ENCODE measurements at regions of chr3 and their contacts with region 1.

Region 1: DNA sequence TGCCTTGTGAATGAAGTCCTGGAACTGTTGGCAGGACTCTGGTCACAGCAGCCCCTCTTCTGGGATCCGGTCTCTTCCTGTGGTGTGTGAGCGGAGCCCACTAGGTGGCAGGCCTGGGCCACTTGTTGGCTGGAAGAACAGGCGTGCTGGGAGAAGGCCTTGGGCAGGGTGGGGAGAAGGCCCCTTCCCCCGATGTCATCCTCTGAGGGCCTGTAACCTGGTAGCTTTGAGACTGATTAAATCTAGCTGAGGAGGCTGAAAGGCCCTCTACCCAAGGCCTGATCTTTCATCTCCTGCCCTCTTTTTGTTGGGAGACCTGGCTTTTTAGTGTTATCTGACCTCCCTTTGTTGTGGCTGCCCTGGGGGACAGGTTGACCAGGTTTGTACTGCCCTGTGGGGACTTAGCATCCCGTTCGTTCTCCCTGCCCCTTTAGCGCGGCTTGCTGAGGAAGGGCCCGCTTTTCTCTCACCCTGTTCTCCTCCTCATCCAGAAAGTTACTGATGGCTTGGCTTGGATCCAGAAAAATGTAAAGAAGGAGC is 48.3 kb downstream of the CHCHD6 start:
- DNase-seq: peak; percentile 26 to 86
- H3K4me3 ChIP-seq: no peak overlapping the region
- H3K27ac ChIP-seq: no peak overlapping the region
- H3K4me1 ChIP-seq: peaks cover 0 to 16% of the 10 kb centered on the region in 2 donors
- H3K27me3 ChIP-seq: no peaks in the 10 kb centered on the region
- CTCF ChIP-seq: peak; percentile 79 to 87 (median 86)

Region 2: GRCh38 chr3:126911162-126912026 is 159.0 kb after region 1 on chr3:
- intact Hi-C with region 1: no loop called
- DNase-seq: peak; percentile 42 to 77
- H3K4me3 ChIP-seq: no peak overlapping the region
- H3K27ac ChIP-seq: peak overlapping the region in 1 of 2 donors; percentile 57
- H3K4me1 ChIP-seq: no peaks in the 10 kb centered on the region
- H3K27me3 ChIP-seq: no peaks in the 10 kb centered on the region
- CTCF ChIP-seq: no peak

Region 3: DNA sequence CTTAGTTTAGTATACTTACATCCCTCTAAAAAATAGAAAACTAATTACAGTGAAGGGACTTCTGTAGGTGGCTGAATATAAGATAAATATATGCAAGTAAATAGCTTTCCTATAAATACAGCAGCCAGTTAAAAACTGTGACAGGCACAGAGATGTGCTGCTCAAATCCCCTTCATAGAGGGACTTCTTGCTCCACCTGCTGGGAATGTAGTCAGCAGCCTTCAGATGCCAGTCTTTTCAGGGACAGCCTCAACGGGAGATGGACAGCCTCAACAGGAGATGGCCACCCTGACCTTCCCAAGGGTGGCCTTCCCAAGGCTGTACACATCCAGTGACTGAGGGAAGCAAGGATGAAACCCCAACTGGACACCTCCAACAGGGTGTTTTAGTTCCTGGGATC is 424.9 kb after region 1 on chr3:
- intact Hi-C with region 1: loop called (anchors 2 kb)
- DNase-seq: no peak
- H3K4me3 ChIP-seq: no peak overlapping the region
- H3K27ac ChIP-seq: no peak overlapping the region
- H3K4me1 ChIP-seq: no peaks in the 10 kb centered on the region
- H3K27me3 ChIP-seq: no peaks in the 10 kb centered on the region
- CTCF ChIP-seq: peak in 2 of 3 experiments; percentile 23 to 54

Region 4: DNA sequence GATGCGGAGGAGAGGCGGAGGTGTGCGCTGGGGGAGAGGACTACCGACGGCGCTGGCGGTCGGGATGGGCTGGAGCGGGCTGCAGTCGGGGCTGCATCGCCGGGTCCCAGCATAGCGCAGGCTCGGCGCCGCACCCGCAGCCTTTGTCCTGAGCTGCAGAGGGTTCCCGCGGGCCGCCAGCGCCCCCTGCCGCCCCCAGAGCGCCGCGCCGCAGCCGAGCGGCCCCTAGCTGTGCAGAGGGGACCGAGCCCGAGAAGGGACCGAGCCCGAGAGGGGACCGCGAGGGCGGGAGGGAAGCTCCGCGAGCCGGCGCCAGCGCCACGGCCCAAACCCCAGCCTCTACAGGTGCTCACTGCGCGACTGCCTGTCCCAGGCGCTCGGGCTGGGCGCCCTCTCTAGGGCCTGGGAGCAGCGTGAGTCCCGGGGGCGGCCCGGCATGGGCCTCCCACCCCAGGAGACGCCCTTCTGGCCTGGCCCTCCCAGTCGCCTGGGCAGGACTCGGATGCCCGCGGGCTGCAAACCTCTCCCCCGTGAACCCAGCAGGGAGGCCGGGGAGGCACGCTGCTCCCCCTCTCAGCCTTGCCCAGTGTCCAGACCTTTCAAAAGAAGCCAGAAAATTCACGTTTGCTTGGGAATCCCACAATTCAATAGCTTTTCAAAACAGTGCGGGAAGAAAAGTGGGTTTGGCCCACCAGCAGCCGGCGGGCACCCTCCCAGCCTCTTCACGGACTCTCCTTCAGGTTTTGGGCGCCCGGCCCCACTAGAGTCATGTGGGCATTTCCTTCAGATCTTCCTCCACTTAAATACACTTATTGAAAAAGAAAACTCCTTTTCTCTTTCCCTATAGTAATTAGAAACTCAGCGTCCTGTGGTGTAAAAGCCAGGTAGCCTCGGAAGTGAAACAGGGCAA is 703.4 kb after region 1 on chr3:
- intact Hi-C with region 1: loop called (anchors 5 kb)
- DNase-seq: peak in 1 of 2 donors; percentile 79
- H3K4me3 ChIP-seq: peak overlapping the region; percentile 49 to 62
- H3K27ac ChIP-seq: no peak overlapping the region
- H3K4me1 ChIP-seq: peaks cover 0 to 18% of the 10 kb centered on the region in 2 donors
- H3K27me3 ChIP-seq: no peaks in the 10 kb centered on the region
- CTCF ChIP-seq: peak; percentile 84 to 95 (median 92)

Region 5: GRCh38 chr3:127544192-127544802 is 791.9 kb after region 1 on chr3:
- intact Hi-C with region 1: loop called (anchors 2 kb)
- DNase-seq: peak in 1 of 2 donors; percentile 85
- H3K4me3 ChIP-seq: no peak overlapping the region
- H3K27ac ChIP-seq: no peak overlapping the region
- H3K4me1 ChIP-seq: peaks cover 0 to 19% of the 10 kb centered on the region in 2 donors
- H3K27me3 ChIP-seq: no peaks in the 10 kb centered on the region
- CTCF ChIP-seq: peak; percentile 55 to 85 (median 67)

Measured in ascending aorta (tissue), 2 donors.